GM10248 (cell line): ENCODE measurements at regions of chr5 and their contacts with region 1.

Region 1: GRCh38 chr5:118987988-118988865 is at the start of gene DTWD2:
- DNase-seq: peak; percentile 93
- CTCF ChIP-seq: peak; percentile 98

Region 2: GRCh38 chr5:118937393-118938061 is 50.7 kb before region 1 on chr5:
- CTCF ChIA-PET with region 1: interaction called, 10 read pairs
- POLR2A ChIA-PET with region 1: no interaction called
- DNase-seq: no peak
- CTCF ChIP-seq: no peak

Region 3: GRCh38 chr5:119022017-119022745 is 34.0 kb after region 1 on chr5:
- CTCF ChIA-PET with region 1: interaction called, 19 read pairs
- POLR2A ChIA-PET with region 1: no interaction called
- DNase-seq: peak; percentile 38
- CTCF ChIP-seq: peak; percentile 48

Region 4: DNA sequence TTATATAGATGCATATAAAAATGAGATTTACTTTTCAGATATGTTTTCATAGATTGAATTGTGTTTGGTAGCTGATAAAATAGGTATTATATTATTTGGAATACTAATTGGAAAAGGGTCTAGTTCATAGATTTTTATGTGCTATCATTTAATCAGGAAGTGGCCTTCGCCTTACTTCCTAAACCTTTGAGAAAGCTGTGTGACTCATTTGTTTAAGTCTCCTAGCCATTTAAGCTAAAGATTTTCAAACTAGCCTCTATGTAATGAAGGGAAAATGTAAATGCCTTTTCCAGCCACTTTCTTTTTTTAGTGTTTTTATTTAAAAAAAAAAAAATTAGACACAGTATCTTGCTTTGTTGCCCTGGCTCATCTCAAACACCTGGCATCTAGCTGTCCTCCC is 180.2 kb after region 1 on chr5:
- CTCF ChIA-PET with region 1: no interaction called
- POLR2A ChIA-PET with region 1: no interaction called
- DNase-seq: no peak
- CTCF ChIP-seq: no peak

Region 5: GRCh38 chr5:119255571-119256356 is 267.5 kb after region 1 on chr5:
- CTCF ChIA-PET with region 1: interaction called, 23 read pairs
- POLR2A ChIA-PET with region 1: no interaction called
- DNase-seq: peak; percentile 21
- CTCF ChIP-seq: no peak

Region 6: GRCh38 chr5:119322948-119323537 is 334.8 kb after region 1 on chr5:
- CTCF ChIA-PET with region 1: interaction called, 10 read pairs
- POLR2A ChIA-PET with region 1: no interaction called
- DNase-seq: no peak
- CTCF ChIP-seq: no peak

Region 7: DNA sequence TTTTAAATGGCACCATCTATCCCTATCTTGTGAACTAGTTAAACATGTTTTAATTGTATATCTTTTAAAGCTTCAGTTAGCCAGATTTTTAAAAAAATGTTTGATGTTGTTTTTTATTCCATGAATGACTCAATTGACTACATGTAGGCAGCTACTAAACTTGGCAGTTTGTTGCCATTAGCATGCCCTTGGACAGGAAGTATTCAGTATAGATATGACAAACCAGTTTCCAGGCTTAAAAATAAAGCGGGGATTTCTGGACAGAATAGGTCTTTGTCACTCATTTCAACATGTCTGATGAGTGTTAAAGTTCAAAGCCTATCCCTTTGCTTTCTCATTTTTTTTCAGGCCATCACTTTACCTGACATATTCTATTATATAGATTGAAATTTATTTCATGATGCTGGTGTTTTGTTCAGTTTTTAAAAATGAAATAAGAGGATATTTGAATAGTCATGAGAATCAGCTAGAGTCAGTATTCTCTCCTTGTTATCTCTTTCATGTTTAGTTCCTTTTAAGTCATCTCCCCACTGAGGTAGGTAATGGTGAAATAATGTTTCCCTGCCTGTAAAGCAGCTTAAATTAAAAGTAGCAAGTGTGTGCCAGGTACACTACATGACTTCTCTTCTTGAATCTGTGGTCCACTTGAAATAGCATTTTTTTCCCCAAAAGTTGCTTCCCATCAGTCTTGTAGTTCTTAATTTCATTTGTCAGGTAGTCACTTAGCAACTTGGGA is 379.4 kb after region 1 on chr5:
- CTCF ChIA-PET with region 1: interaction called, 11 read pairs
- POLR2A ChIA-PET with region 1: no interaction called
- DNase-seq: no peak
- CTCF ChIP-seq: no peak

Region 8: GRCh38 chr5:119418531-119419116 is 430.4 kb after region 1 on chr5:
- CTCF ChIA-PET with region 1: interaction called, 171 read pairs
- POLR2A ChIA-PET with region 1: no interaction called
- DNase-seq: no peak
- CTCF ChIP-seq: no peak